ENCODE measurements at regions of chr6 and their contacts with region 1.

Region 1: DNA sequence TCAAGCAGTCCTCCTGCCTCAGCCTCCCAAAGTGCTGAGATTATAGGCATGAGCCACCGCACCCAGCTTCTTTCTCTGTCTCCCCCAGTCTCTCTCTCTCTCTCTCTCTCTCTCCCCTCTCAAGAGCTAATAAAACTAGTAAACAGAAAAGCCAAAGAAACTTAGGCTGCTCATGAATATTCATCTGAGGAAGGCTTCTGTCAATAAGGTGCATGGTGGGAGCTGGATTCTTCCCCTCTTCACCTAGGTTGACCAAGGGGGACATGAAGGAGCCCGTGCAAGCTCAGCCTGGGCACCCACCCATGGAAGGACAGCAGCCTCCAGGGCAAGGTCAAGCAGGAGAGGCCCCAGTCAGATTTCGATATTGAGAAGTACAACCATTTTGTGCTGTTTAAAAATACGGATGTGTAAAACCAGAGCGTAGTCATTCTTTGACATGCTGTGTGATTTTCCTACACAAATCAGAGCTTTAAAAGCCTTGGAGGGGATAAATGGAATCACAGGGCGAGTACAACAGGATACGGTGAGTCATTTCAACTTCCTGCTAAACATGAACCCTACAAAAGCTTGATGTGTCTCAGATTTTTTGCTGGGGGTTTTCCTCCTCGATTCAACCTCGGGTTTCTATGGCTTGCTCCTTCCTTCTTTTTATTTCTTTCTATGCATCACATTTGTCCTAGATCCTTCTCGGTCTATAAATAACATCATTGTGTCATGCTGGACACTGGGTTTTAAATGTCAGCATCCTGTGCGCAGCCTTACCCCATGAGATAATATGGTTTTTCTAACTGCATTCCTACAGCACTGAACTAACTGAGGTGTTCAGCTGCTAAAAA is 368.9 kb upstream of the JARID2 start:
- DNase-seq: peak; percentile 52
- ATAC-seq: peak; percentile 74
- H3K4me3 Mint-ChIP-seq: peak overlapping the region; percentile 47
- H3K27ac Mint-ChIP-seq: peak overlapping the region; percentile 99
- H3K4me1 Mint-ChIP-seq: peaks cover 78% of the 10 kb centered on the region
- H3K27me3 Mint-ChIP-seq: no peaks in the 10 kb centered on the region

Region 2: GRCh38 chr6:14542670-14543366 is 334.2 kb before region 1 on chr6:
- CTCF ChIA-PET with region 1: no interaction called
- POLR2A ChIA-PET with region 1: no interaction called
- intact Hi-C with region 1: loop called in 1 of 2 experiments (anchors 2 kb)
- DNase-seq: peak; percentile 90
- ATAC-seq: peak; percentile 99
- H3K4me3 Mint-ChIP-seq: no peak overlapping the region
- H3K27ac Mint-ChIP-seq: peak overlapping the region; percentile 79
- H3K4me1 Mint-ChIP-seq: peaks cover 41% of the 10 kb centered on the region
- H3K27me3 Mint-ChIP-seq: peaks cover 2% of the 10 kb centered on the region

Region 3: DNA sequence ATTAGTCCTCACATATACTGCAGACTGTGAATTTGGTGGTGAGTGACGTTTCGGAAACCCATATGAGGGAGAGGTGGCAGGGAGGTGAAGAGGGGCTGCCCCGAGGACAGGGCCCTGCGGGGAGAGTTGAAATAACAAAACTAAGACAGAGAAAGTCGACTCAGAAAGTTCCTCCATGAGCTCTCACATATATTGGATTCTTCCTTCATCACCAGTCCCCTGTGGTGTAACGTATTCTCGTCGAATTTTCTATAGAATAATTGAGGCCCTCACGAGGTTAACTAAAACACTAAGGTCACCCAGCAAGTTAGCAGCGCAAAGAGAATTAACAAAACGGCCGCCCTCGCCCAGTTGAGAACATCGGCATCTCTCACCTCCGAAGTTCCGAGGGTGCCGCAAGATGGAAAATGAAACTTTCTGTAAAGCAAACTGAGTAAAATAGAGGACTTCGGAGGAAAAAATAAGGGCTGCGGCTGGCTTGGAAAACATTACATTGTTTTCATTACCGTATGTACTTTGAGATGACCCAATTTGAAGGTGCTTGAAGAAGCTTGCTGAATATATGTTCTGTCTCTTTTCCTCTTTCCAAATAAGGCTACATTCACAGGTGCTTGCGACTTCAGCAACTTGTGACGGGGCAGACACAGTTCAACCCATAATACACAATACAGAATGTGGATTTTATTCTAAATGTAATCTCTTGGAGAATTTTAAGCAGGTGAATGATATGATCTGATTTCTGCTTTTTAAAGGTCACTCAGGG is 122.1 kb before region 1 on chr6:
- CTCF ChIA-PET with region 1: interaction called, 3 read pairs
- POLR2A ChIA-PET with region 1: interaction called, 5 read pairs
- intact Hi-C with region 1: loop called (anchors 1 kb)
- DNase-seq: peak; percentile 82
- ATAC-seq: peak; percentile 81
- H3K4me3 Mint-ChIP-seq: peak overlapping the region; percentile 40
- H3K27ac Mint-ChIP-seq: peak overlapping the region; percentile 96
- H3K4me1 Mint-ChIP-seq: peaks cover 60% of the 10 kb centered on the region
- H3K27me3 Mint-ChIP-seq: no peaks in the 10 kb centered on the region

Region 4: DNA sequence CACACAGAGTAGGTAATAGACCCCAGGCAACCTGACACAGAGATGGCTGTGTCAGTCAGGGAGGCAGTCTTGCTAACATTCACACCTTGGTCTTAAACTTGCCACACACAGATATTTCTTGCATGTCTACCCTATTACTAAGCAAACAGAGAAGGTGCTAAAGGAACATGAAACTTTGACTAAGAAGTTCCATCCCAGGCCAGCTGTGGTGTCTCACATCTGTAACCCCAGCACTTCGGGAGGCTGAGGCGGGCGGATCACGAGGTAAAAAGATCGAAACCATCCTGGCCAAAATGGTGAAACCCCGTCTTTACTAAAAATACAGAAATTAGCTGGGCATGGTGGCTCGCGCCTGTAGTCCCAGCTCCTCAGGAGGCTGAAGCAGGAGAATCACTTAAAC is 146.5 kb after region 1 on chr6:
- CTCF ChIA-PET with region 1: no interaction called
- POLR2A ChIA-PET with region 1: no interaction called
- intact Hi-C with region 1: loop called (anchors 1 kb)
- DNase-seq: peak; percentile 85
- ATAC-seq: peak; percentile 98
- H3K4me3 Mint-ChIP-seq: peak overlapping the region; percentile 37
- H3K27ac Mint-ChIP-seq: peak overlapping the region; percentile 89
- H3K4me1 Mint-ChIP-seq: peaks cover 22% of the 10 kb centered on the region
- H3K27me3 Mint-ChIP-seq: no peaks in the 10 kb centered on the region

Region 5: DNA sequence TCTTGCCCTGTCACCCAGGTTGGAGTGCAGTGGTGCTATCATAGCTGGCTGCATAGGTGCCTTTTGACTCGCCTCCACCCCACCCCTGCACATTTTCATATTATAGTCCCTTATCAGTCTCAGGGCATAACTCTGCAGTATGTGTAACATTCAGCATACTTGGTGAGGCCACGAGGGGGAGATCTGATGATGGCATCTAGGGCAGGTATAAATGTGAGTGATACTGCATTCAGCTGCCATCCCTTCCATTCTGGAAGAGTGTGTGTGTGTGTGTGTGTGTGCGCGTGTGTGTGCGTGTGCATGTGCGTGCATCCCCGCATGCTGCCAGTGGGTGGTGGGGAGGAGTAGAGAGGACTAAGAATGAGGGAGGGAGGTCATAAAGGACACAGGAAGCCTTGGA is 450.3 kb after region 1 on chr6:
- CTCF ChIA-PET with region 1: no interaction called
- POLR2A ChIA-PET with region 1: no interaction called
- intact Hi-C with region 1: no loop called
- DNase-seq: peak; percentile 73
- ATAC-seq: peak; percentile 68
- H3K4me3 Mint-ChIP-seq: no peak overlapping the region
- H3K27ac Mint-ChIP-seq: peak overlapping the region; percentile 59
- H3K4me1 Mint-ChIP-seq: peaks cover 91% of the 10 kb centered on the region
- H3K27me3 Mint-ChIP-seq: no peaks in the 10 kb centered on the region

Region 6: GRCh38 chr6:15491255-15491985 is 614.4 kb after region 1 on chr6:
- CTCF ChIA-PET with region 1: no interaction called
- POLR2A ChIA-PET with region 1: no interaction called
- intact Hi-C with region 1: loop called in 1 of 2 experiments (anchors 5 kb)
- DNase-seq: peak; percentile 86
- ATAC-seq: peak; percentile 82
- H3K4me3 Mint-ChIP-seq: no peak overlapping the region
- H3K27ac Mint-ChIP-seq: peak overlapping the region; percentile 82
- H3K4me1 Mint-ChIP-seq: peaks cover 42% of the 10 kb centered on the region
- H3K27me3 Mint-ChIP-seq: no peaks in the 10 kb centered on the region

Measured in activated CD4-positive, alpha-beta T cell treated with anti-CD3 and anti-CD28 coated beads for 36 hours (primary cell).